ENCODE measurements at regions of chr9 and their contacts with region 1.

Region 1: DNA sequence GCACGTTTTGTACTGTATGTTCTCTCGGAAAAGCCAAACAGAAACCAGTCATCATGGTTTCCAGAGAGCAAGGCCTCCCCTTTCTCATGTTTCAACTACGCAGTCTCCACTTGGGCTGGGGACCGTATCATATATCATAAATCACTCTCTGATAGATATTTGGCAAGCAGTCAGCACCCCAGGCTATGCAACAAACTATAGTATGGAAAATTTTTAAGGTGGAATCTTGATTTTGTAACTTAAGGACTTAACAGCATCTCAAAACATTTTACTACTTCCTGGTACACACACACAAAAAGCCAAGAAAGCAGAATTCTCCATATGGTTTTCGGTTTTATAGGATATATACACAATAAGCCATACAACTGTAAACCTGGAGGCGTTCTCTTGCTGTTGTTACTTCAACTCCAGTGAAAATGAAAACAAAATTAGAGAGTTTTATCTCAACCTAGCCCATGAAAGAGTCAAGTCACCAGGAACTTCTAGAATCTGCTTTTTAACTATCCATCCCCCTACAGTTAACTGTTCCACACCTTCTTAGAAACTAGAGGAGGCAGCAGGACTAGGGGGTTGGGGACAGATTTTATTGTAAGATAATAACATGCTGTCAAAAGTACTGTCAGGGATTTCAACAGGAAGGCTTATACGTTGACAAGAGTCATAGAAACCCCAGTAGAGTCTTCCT is 283.4 kb downstream of the NFIB start:
- DNase-seq: no peak
- ATAC-seq: peak; percentile 59

Region 2: GRCh38 chr9:13769006-13769405 is 261.5 kb before region 1 on chr9:
- intact Hi-C with region 1: no loop called
- DNase-seq: no peak
- ATAC-seq: no peak

Region 3: DNA sequence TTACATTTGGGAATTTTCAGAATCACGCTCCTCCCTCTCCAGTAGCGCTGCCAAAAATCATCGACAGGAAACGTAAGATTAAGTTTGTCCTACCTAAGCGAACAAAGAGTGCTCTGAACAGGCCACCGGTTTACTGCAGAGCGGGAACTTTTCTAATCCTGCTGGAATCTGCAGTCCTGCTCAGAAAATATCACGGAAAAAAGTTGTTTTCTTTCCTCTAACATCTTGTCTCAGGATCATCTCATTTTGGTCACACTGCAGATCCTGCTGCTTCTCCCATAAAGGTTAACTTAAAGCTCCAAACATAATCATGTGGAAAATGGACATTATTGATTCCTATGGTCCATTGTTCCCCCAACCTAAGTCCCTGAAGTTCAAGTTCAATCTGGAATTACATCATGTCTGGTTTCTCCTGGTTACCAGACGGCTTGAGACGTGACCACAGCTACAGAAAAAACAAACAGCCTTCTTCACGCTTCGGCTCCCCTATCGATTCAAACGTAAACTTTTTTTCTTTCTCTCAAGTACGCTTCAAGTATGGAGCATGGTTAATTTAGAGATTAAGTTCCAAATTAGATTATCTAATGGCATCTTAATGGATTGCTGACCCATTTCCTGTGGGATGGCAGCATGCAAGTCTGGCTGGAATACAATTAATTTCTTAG is 65.9 kb after region 1 on chr9:
- intact Hi-C with region 1: loop called (anchors 10 kb)
- DNase-seq: no peak
- ATAC-seq: peak; percentile 82

Region 4: GRCh38 chr9:14322211-14323082 is 291.9 kb after region 1 on chr9:
- intact Hi-C with region 1: loop called (anchors 10 kb)
- DNase-seq: peak; percentile 96
- ATAC-seq: peak; percentile 94